Dorsolateral prefrontal cortex (tissue), 120 donors: ENCODE measurements at regions of chr11 and their contacts with region 1.

Region 1: GRCh38 chr11:14148653-14149273 is 186.2 kb downstream of the SPON1 start:
- DNase-seq: no peak
- H3K4me3 ChIP-seq: no peak overlapping the region
- H3K27ac ChIP-seq: no peak overlapping the region
- H3K27me3 ChIP-seq: peaks cover 0 to 3% (median 0%) of the 10 kb centered on the region in 45 donors
- CTCF ChIP-seq: peak; percentile 33 to 76 (median 56)

Region 2: DNA sequence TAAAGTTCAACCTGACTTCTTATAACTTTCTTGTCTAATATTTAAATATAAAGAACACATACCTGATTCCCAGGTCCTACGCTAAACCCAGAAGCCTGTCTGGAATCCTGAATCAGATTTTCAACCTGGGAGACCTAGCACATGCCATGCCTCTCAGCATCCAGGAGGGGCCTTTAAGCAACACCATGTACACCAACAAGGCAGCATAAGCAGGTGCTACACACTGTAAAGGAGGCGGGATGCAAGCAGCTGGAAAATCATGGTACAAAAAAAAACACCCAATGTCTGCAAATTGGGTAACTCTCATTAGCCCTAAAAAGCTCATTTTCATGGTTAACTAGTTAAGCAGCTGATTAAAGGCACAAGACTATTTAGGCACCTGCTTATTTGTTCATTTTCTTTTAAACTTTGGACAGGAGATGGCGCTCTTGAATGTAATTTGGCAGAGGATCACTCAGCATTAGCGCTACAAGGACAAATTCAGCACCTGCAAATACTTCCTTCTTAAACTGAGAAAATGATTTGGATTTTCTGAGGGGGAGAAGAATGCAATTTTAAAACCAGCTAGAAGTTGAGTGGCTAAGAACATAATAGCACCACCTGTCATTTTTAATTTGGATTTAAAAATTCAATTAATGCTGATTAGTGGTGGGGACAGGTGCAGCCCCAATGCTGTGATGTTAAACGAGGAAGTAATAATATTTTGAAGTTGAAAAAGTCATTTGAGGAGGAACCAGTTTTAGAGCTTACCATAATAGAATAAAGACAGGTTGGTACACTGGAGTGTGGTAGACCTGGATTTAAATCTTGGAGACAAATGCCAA is 376.3 kb before region 1 on chr11:
- intact Hi-C with region 1: loop called in 1 of 2 experiments (anchors 10 kb)
- DNase-seq: peak in 1 of 10 donors; percentile 27
- H3K4me3 ChIP-seq: no peak overlapping the region
- H3K27ac ChIP-seq: no peak overlapping the region
- H3K27me3 ChIP-seq: peaks cover 0 to 3% (median 0%) of the 10 kb centered on the region in 45 donors
- CTCF ChIP-seq: peak in 55 of 56 donors; percentile 28 to 85 (median 61)

Region 3: DNA sequence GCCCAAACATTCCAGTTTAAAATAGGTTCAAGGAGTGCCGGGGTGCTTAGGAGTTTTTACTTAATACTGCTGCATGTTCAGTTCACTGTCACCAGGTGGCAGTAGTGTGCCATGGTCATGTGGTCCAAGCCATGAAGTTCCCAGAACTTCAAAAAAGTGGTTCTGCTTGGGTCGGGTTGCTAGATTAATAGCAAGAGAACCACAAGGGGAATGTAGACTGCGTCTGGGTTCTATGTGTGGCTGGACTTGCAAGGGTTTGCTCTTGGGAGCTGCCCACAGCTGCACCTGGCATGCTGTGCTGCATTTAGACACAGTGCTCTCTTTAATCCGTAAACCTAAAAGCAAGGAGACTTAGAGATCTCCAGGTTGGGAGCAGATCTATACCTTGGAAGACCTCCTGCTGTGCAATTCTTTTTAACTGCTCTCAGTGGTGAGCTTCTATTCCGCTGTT is 192.8 kb before region 1 on chr11:
- intact Hi-C with region 1: loop called in 1 of 2 experiments (anchors 10 kb)
- DNase-seq: peak in 8 of 10 donors; percentile 23 to 67 (median 54)
- H3K4me3 ChIP-seq: no peak overlapping the region
- H3K27ac ChIP-seq: no peak overlapping the region
- H3K27me3 ChIP-seq: peaks cover 0 to 13% (median 0%) of the 10 kb centered on the region in 45 donors
- CTCF ChIP-seq: peak; percentile 72 to 98 (median 88)